Heart left ventricle (tissue), 16 donors: ENCODE measurements at regions of chr4 and their contacts with region 1.

Region 1: GRCh38 chr4:151968643-151969042 is 207.8 kb upstream of the GATB start:
- DNase-seq: no peak
- ATAC-seq: peak in 1 of 4 donors; percentile 24
- H3K4me3 ChIP-seq: no peak overlapping the region
- H3K27ac ChIP-seq: no peak overlapping the region
- H3K4me1 ChIP-seq: no peaks in the 10 kb centered on the region
- H3K27me3 ChIP-seq: no peaks in the 10 kb centered on the region
- CTCF ChIP-seq: no peak
- POLR2A ChIP-seq: no peak

Region 2: DNA sequence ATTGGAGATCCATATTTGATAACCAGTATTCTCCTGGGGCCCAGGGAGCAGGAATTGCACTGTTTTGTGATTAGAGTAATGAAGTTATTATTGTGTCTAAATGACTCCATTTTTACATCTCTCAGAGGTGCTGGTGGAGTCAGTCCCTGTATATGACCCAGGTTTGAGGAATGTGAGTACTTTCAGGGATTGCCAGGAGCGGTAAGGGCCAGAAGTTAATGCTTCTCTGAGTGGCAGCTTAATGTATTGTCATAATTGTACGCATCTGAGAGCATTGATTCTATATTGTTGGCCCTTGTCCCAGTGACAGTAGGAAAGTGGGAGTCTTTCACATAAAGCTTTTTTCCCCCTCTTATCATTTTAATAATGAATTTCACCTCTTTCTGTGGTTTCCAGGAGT is 354.1 kb before region 1 on chr4:
- intact Hi-C with region 1: no loop called
- DNase-seq: no peak
- ATAC-seq: no peak
- H3K4me3 ChIP-seq: no peak overlapping the region
- H3K27ac ChIP-seq: no peak overlapping the region
- H3K4me1 ChIP-seq: peaks cover 0 to 16% (median 0%) of the 10 kb centered on the region in 12 donors
- H3K27me3 ChIP-seq: no peaks in the 10 kb centered on the region
- CTCF ChIP-seq: no peak
- POLR2A ChIP-seq: no peak

Region 3: GRCh38 chr4:152032722-152033131 is 64.1 kb after region 1 on chr4:
- intact Hi-C with region 1: loop called in 2 of 10 experiments (anchors 5 kb)
- DNase-seq: peak in 1 of 5 donors; percentile 58
- ATAC-seq: peak; percentile 33 to 85 (median 62)
- H3K4me3 ChIP-seq: no peak overlapping the region
- H3K27ac ChIP-seq: peak overlapping the region in 10 of 12 donors; percentile 20 to 75 (median 54)
- H3K4me1 ChIP-seq: peaks cover 0 to 21% (median 2%) of the 10 kb centered on the region in 12 donors
- H3K27me3 ChIP-seq: no peaks in the 10 kb centered on the region
- CTCF ChIP-seq: no peak
- POLR2A ChIP-seq: no peak